T-cell (primary cell): ENCODE measurements at regions of chr4 and their contacts with region 1.

Region 1: GRCh38 chr4:139522457-139522856 is 33.6 kb downstream of the SETD7 start:
- DNase-seq: no peak
- ATAC-seq: no peak
- H3K4me3 ChIP-seq: no peak overlapping the region
- H3K4me3 Mint-ChIP-seq: no peak overlapping the region
- H3K27ac ChIP-seq: no peak overlapping the region
- H3K27ac Mint-ChIP-seq: no peak overlapping the region
- H3K4me1 ChIP-seq: peaks cover 2 to 17% of the 10 kb centered on the region in 2 experiments
- H3K4me1 Mint-ChIP-seq: peaks cover 6 to 16% (median 14%) of the 10 kb centered on the region in 3 donors
- H3K27me3 ChIP-seq: no peaks in the 10 kb centered on the region
- H3K27me3 Mint-ChIP-seq: no peaks in the 10 kb centered on the region

Region 2: DNA sequence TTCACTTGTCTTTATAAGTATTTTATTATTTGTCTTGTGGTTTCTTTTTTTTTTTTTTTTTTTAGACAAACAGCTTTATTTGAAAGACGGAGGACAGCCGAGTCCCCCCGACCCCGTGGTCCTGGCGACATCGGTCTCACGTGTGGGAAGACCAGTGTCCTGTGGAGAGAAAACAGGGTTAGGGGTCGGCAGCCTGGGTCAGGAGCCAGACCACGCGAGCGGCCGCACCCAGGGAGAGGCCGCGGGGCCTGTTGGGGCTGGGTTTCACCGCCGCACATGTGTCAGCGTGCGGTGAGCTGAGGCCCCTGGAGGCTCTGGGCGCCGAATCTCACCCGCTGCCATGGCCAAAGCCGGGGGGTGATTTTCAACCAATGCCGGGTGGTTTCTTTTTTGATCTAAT is 86.3 kb before region 1 on chr4:
- CTCF ChIA-PET with region 1: no interaction called
- POLR2A ChIA-PET with region 1: interaction called in 1 of 2 experiments, 11 read pairs
- DNase-seq: no peak
- ATAC-seq: no peak
- H3K4me3 ChIP-seq: no peak overlapping the region
- H3K4me3 Mint-ChIP-seq: no peak overlapping the region
- H3K27ac ChIP-seq: no peak overlapping the region
- H3K27ac Mint-ChIP-seq: no peak overlapping the region
- H3K4me1 ChIP-seq: no peaks in the 10 kb centered on the region
- H3K4me1 Mint-ChIP-seq: peaks cover 0 to 9% (median 5%) of the 10 kb centered on the region in 3 donors
- H3K27me3 ChIP-seq: no peaks in the 10 kb centered on the region
- H3K27me3 Mint-ChIP-seq: no peaks in the 10 kb centered on the region

Region 3: GRCh38 chr4:139509727-139510410 is 12.6 kb before region 1 on chr4:
- CTCF ChIA-PET with region 1: no interaction called
- POLR2A ChIA-PET with region 1: no interaction called
- DNase-seq: peak in 1 of 35 experiments; percentile 10
- ATAC-seq: no peak
- H3K4me3 ChIP-seq: no peak overlapping the region
- H3K4me3 Mint-ChIP-seq: no peak overlapping the region
- H3K27ac ChIP-seq: no peak overlapping the region
- H3K27ac Mint-ChIP-seq: no peak overlapping the region
- H3K4me1 ChIP-seq: no peaks in the 10 kb centered on the region
- H3K4me1 Mint-ChIP-seq: no peaks in the 10 kb centered on the region
- H3K27me3 ChIP-seq: no peaks in the 10 kb centered on the region
- H3K27me3 Mint-ChIP-seq: no peaks in the 10 kb centered on the region

Region 4: GRCh38 chr4:139582044-139582443 is 59.6 kb after region 1 on chr4:
- CTCF ChIA-PET with region 1: no interaction called
- POLR2A ChIA-PET with region 1: interaction called in 1 of 2 experiments, 12 read pairs
- DNase-seq: no peak
- ATAC-seq: no peak
- H3K4me3 ChIP-seq: no peak overlapping the region
- H3K4me3 Mint-ChIP-seq: no peak overlapping the region
- H3K27ac ChIP-seq: no peak overlapping the region
- H3K27ac Mint-ChIP-seq: no peak overlapping the region
- H3K4me1 ChIP-seq: no peaks in the 10 kb centered on the region
- H3K4me1 Mint-ChIP-seq: no peaks in the 10 kb centered on the region
- H3K27me3 ChIP-seq: peaks cover 0 to 4% of the 10 kb centered on the region in 2 experiments
- H3K27me3 Mint-ChIP-seq: peaks cover 13 to 17% of the 10 kb centered on the region in 2 donors